Head of caudate nucleus (tissue), 42 donors: ENCODE measurements at regions of chr20 and their contacts with region 1.

Region 1: GRCh38 chr20:13105864-13106457 is 97.2 kb downstream of the SPTLC3 start:
- DNase-seq: peak in 2 of 42 donors; percentile 7 to 39

Region 2: GRCh38 chr20:12882832-12883506 is 223.0 kb before region 1 on chr20:
- intact Hi-C with region 1: no loop called
- DNase-seq: no peak

Region 3: DNA sequence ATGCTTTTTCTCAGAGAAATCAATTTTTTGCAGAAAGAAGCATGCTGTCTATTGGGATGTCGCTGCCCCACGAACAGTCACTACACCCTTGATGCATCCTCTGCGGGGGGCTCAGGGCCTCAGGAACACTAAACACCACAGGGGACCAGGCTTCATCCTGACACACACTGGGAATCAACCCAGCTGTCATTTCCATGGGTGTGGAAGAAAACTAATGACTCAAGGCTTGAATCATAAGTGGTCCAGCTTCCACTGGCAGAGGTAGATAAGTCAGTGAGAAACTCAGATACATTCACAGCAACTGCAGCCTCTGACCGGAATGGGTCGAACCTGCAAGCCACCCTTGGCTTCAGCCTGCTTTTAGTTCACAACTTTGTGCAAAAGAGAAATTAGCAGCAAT is 178.5 kb before region 1 on chr20:
- intact Hi-C with region 1: loop called (anchors 2 kb)
- DNase-seq: no peak

Region 4: GRCh38 chr20:12970372-12970821 is 135.6 kb before region 1 on chr20:
- intact Hi-C with region 1: loop called (anchors 10 kb)
- DNase-seq: peak in 15 of 42 donors; percentile 8 to 49 (median 21)

Region 5: GRCh38 chr20:13694420-13695150 is 588.6 kb after region 1 on chr20:
- intact Hi-C with region 1: no loop called
- DNase-seq: no peak